Activated T-helper 2 cell treated with anti-CD3 and anti-CD28 coated beads, Interferon-gamma antibody, Interleukin-2, Interleukin-4, amounts not matched to agents 10 μg/mL and 5 μg/mL and 100 μg/mL, durations not matched to agents 14 hours and 24 hours and 36 hours (primary cell): ENCODE measurements at regions of chr1 and their contacts with region 1.

Region 1: DNA sequence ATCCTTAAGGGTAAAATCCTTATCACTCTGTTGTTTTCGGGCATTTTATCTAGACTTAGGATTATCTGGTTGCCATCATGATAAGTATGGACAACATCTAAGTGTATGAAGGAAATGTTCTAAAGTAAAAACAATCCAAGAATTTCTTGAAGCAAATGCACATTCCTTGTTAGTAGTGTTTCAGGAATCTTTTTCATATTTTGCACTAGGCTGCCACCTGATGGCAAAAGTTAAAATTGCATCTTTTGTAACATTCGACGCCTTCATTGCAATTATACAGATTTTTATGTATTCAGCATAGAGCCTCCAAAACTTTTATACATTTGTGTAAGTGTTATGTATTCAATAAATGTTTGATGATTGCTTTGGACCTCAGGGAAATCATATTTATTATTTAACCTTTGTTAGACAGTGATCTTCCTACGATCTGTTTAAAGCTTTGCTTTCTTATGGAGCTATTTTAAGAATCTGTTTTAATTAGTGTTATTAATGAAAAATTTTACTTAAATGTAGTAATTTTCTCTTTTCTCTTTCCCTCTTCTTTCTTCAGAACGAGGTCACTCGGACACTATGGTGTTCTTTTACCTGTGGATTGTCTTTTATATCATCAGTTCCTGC is 49.4 kb upstream of the KIAA1614 start:
- DNase-seq: no peak
- H3K4me3 Mint-ChIP-seq: no peak overlapping the region
- H3K27ac Mint-ChIP-seq: no peak overlapping the region
- H3K4me1 Mint-ChIP-seq: peaks cover 1% of the 10 kb centered on the region
- H3K27me3 Mint-ChIP-seq: no peaks in the 10 kb centered on the region

Region 2: DNA sequence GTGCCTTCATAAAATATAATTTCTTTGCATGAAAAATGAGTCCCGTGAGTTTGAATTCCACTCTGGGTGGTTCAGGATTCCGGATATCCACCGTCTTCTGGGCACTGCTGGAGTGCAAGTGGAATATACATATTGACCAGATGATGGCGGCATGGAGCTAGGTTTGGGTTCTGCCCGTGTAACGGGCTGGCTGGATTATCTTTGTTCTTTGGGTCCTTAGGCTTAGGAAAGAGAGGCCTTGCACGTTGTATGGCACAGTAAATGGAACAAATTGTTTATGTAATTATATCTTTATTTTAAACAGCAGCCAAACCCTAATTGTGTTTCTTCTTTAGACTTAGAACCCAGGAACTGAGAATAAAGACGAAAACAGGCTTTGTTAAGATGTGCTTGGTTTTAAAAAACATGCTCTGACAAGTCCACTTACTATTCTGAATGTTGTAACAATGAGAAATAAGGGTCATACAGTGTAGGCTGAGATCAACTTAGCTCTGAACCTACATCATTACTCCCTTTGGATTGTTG is 347.3 kb before region 1 on chr1:
- intact Hi-C with region 1: loop called (anchors 5 kb)
- DNase-seq: peak; percentile 30
- H3K4me3 Mint-ChIP-seq: no peak overlapping the region
- H3K27ac Mint-ChIP-seq: no peak overlapping the region
- H3K4me1 Mint-ChIP-seq: peaks cover 1% of the 10 kb centered on the region
- H3K27me3 Mint-ChIP-seq: peaks cover 11% of the 10 kb centered on the region

Region 3: GRCh38 chr1:180533266-180533987 is 329.8 kb before region 1 on chr1:
- intact Hi-C with region 1: loop called (anchors 5 kb)
- DNase-seq: peak; percentile 50
- H3K4me3 Mint-ChIP-seq: no peak overlapping the region
- H3K27ac Mint-ChIP-seq: no peak overlapping the region
- H3K4me1 Mint-ChIP-seq: no peaks in the 10 kb centered on the region
- H3K27me3 Mint-ChIP-seq: peaks cover 12% of the 10 kb centered on the region

Region 4: GRCh38 chr1:180617774-180618395 is 245.4 kb before region 1 on chr1:
- intact Hi-C with region 1: no loop called
- DNase-seq: no peak
- H3K4me3 Mint-ChIP-seq: no peak overlapping the region
- H3K27ac Mint-ChIP-seq: no peak overlapping the region
- H3K4me1 Mint-ChIP-seq: no peaks in the 10 kb centered on the region
- H3K27me3 Mint-ChIP-seq: no peaks in the 10 kb centered on the region